Activated T-helper 1 cell treated with anti-CD3 and anti-CD28 coated beads, Interleukin-12 subunit alpha, Interleukin-12 subunit beta, Interleukin-2, Interleukin-4 antibody, amounts not matched to agents 30 ng/mL and 10 ng/mL and 1 ng/mL, durations not matched to agents 14 hours and 24 hours and 36 hours (primary cell): ENCODE measurements at regions of chr21 and their contacts with region 1.

Region 1: GRCh38 chr21:33380483-33380998 is 22.7 kb upstream of the IFNGR2 start:
- DNase-seq: peak; percentile 70
- H3K4me3 Mint-ChIP-seq: peak overlapping the region; percentile 23
- H3K27ac Mint-ChIP-seq: peak overlapping the region; percentile 84
- H3K4me1 Mint-ChIP-seq: peaks cover 54% of the 10 kb centered on the region
- H3K27me3 Mint-ChIP-seq: peaks cover 40% of the 10 kb centered on the region

Region 2: DNA sequence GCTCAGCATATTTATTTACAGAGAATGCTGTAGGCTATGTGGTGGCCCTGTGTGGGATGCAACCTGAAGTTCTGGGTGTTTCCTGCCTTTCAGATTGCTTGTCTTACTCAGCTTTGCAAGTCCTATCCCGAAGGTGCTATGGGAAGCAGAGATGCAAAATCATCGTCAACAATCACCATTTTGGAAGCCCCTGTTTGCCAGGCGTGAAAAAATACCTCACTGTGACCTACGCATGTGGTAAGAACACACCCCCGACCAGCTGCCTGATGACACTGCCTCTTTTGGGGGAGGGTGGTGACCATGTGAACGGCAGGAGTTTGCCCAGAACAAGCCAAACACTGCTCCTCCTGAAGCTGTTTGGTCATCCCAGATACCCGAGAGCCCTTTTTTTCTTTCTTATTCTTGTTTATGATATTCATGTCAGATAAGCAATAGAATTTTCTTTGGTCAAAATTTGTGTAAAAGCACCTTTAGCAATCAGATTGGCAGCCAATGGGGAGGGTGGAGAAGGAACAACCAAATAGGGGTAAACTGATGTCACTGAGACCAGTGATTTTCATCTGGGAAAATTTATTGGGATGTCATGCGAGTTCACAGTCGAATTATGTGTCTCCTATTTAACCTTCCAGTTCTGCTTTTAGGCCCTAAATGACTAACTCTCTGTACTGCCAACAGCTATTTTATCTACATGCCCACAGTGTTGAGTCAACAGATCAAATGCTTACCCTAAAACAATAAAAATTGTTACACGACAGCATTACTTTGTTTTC is 885.4 kb before region 1 on chr21:
- intact Hi-C with region 1: loop called (anchors 5 kb)
- DNase-seq: no peak
- H3K4me3 Mint-ChIP-seq: no peak overlapping the region
- H3K27ac Mint-ChIP-seq: no peak overlapping the region
- H3K4me1 Mint-ChIP-seq: peaks cover 16% of the 10 kb centered on the region
- H3K27me3 Mint-ChIP-seq: no peaks in the 10 kb centered on the region

Region 3: DNA sequence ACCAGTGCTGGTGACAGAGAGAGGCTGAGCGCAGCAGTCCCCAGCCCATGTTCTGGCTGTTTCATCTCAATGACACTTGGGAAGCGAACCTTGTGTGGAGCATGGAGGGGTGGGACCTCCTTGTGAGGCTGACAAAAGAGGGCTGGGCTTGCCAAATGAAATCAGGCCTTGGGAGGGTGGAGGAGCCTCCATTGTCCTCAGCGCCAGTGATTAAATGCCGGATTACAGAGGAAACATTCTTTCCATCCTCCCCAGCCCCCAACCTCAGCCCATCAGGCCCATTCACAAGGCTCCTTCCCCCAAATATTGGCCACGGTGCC is 545.7 kb before region 1 on chr21:
- intact Hi-C with region 1: no loop called
- DNase-seq: no peak
- H3K4me3 Mint-ChIP-seq: no peak overlapping the region
- H3K27ac Mint-ChIP-seq: no peak overlapping the region
- H3K4me1 Mint-ChIP-seq: no peaks in the 10 kb centered on the region
- H3K27me3 Mint-ChIP-seq: peaks cover 14% of the 10 kb centered on the region

Region 4: GRCh38 chr21:32929633-32930038 is 450.9 kb before region 1 on chr21:
- intact Hi-C with region 1: loop called (anchors 2 kb)
- DNase-seq: no peak
- H3K4me3 Mint-ChIP-seq: no peak overlapping the region
- H3K27ac Mint-ChIP-seq: no peak overlapping the region
- H3K4me1 Mint-ChIP-seq: peaks cover 31% of the 10 kb centered on the region
- H3K27me3 Mint-ChIP-seq: no peaks in the 10 kb centered on the region

Region 5: DNA sequence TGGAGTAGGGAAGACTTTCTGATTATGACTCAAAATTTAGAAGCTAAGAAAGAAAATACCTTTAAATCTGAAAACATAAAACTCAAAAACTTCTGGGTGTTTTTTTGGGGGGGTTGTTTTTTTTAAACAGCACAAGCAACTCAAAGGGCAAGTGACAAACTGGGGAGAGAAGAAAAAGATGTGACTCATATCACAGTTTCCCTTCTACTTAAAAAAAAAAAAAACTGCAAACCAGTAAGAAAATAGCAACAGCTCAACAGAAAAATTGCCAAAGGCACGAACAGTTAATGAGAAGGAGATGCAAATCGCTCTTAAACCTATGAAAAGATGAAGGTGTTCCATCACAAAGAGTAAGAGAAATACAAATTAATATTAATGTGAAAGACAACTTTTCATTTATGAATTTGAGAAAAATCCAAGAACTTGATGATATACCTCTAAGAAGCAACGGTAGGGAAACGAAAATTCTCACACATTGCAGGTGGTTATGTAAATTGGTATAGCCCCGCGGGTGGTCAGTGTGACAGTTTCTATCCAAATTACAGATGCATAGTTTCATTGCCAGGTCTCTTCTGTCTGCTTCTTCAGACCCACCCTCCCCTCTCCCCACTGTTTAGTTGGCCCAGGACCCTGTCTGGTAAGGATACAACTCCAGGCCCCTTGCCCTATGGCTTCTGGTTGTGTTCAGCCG is 141.8 kb before region 1 on chr21:
- intact Hi-C with region 1: loop called (anchors 2 kb)
- DNase-seq: no peak
- H3K4me3 Mint-ChIP-seq: peak overlapping the region; percentile 51
- H3K27ac Mint-ChIP-seq: peak overlapping the region; percentile 91
- H3K4me1 Mint-ChIP-seq: peaks cover 66% of the 10 kb centered on the region
- H3K27me3 Mint-ChIP-seq: no peaks in the 10 kb centered on the region

Region 6: GRCh38 chr21:33360881-33361602 is 19.5 kb before region 1 on chr21:
- intact Hi-C with region 1: loop called (anchors 1 kb)
- DNase-seq: peak; percentile 72
- H3K4me3 Mint-ChIP-seq: peak overlapping the region; percentile 83
- H3K27ac Mint-ChIP-seq: peak overlapping the region; percentile 64
- H3K4me1 Mint-ChIP-seq: peaks cover 21% of the 10 kb centered on the region
- H3K27me3 Mint-ChIP-seq: no peaks in the 10 kb centered on the region

Region 7: DNA sequence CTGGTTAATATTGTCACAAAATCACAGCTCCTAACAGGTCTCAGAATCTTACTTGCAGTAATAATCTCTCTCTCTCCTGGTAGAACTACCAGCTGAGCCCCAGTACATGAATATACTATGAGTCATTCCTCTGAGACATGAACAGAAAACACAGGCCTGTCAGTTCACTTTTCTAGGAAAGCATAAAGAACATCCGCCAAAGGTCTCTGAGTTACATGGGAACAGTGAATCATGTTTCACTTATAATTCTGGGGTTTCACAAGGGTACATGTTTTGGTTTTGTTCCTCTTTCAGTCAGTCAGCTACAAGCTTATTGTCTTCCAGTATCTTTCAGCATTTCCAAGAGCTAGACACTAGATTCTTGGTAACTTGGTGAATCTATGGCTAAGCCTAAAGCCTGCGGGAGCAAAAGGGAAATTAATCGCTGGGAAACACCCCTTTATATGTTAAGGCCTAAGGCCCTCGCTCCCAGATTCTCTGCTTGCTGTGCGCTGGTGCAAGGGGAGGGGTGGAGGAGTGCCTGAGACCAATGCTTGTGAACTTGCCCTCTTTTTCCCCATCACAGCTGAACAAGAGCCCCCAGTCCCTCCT is 54.3 kb after region 1 on chr21:
- intact Hi-C with region 1: loop called (anchors 1 kb)
- DNase-seq: peak; percentile 33
- H3K4me3 Mint-ChIP-seq: peak overlapping the region; percentile 13
- H3K27ac Mint-ChIP-seq: peak overlapping the region; percentile 33
- H3K4me1 Mint-ChIP-seq: peaks cover 33% of the 10 kb centered on the region
- H3K27me3 Mint-ChIP-seq: peaks cover 4% of the 10 kb centered on the region